Activated naive CD4-positive, alpha-beta T cell treated with anti-CD3 and anti-CD28 coated beads for 36 hours (primary cell): ENCODE measurements at regions of chr14 and their contacts with region 1.

Region 1: GRCh38 chr14:77660754-77661153 is 44.3 kb upstream of the SPTLC2 start:
- DNase-seq: no peak
- H3K4me3 Mint-ChIP-seq: no peak overlapping the region
- H3K27ac Mint-ChIP-seq: no peak overlapping the region
- H3K4me1 Mint-ChIP-seq: no peaks in the 10 kb centered on the region
- H3K27me3 Mint-ChIP-seq: no peaks in the 10 kb centered on the region

Region 2: DNA sequence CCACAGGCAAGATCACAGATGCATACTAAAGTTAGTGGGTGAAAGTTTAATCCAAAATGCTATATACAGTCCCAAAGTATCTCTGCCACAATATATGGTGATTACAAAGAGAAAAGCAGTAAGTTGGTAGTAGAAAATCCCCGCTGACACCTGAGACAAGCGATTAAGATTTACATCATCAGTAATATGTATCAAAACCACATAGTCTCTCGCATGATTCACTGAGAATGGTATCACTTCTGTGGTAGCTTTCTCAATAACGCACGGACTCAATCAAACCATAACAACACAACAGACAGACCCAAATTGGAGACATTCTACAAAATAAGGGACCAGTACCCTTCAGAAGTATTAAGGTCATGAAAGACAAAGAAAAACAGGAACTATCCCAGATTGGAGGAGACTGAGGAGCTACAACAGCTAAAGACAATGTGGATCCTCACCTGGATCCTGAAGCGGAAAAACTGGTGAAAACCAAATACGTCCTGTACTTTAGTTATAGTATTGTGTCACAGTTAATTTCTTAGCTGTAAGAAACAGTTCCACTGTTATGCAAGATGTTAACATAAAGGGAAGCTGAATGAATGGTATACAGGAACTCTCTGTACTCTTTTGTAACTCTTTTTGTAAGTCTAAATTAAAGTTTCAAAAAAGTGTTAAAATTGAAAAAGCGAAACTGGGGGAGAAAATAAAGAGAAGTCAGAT is 95.3 kb before region 1 on chr14:
- CTCF ChIA-PET with region 1: no interaction called
- intact Hi-C with region 1: no loop called
- DNase-seq: no peak
- H3K4me3 Mint-ChIP-seq: no peak overlapping the region
- H3K27ac Mint-ChIP-seq: peak overlapping the region; percentile 44
- H3K4me1 Mint-ChIP-seq: peaks cover 10% of the 10 kb centered on the region
- H3K27me3 Mint-ChIP-seq: no peaks in the 10 kb centered on the region

Region 3: DNA sequence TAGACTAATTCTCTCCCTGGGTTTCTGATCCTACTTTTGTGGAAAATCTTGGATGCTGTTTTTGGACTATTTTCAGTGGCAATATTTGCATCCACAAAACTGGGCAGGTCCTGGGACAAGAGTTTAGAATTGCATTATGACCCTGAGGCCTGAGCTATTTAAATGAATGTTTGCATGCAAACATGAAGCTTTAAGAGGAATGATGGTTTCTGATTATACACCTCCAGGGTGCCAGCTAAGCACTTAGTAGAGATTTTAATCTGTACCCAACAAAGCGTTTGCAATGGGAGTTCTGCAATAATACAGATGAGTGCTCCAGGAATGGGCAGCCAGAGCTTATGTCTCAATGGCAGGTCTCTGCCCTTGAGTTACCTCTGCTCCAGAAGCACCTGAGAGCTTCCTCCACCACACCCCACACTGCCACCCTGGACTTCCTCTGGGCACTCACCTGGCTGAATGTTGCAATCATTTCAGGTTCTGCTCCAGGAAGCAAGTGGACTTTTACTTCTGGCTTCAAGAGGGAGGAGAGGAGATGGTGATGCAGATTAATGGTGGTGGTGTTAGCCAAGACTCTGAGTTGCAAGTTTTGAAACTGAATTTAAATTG is 38.3 kb before region 1 on chr14:
- CTCF ChIA-PET with region 1: no interaction called
- intact Hi-C with region 1: no loop called
- DNase-seq: no peak
- H3K4me3 Mint-ChIP-seq: no peak overlapping the region
- H3K27ac Mint-ChIP-seq: no peak overlapping the region
- H3K4me1 Mint-ChIP-seq: peaks cover 4% of the 10 kb centered on the region
- H3K27me3 Mint-ChIP-seq: no peaks in the 10 kb centered on the region

Region 4: DNA sequence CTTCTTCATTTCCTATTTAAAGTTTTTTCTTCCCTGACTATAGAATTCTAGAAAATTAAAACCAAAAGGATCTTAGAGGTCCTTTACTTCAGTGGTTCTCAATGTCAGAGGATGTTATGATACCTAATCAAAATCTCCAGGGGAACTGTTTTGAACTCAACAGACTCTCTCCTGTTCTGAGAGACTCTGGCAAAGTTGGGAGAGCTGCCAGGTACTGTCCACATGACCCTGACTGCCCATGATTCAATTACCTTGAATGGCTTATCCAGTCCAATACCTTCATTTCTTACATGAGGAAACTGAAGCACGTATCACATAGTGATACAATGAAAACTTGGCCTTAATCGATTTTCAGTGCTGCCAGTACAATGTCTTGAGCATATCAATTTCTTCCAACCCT is 30.5 kb after region 1 on chr14:
- CTCF ChIA-PET with region 1: no interaction called
- intact Hi-C with region 1: no loop called
- DNase-seq: no peak
- H3K4me3 Mint-ChIP-seq: no peak overlapping the region
- H3K27ac Mint-ChIP-seq: no peak overlapping the region
- H3K4me1 Mint-ChIP-seq: no peaks in the 10 kb centered on the region
- H3K27me3 Mint-ChIP-seq: no peaks in the 10 kb centered on the region

Region 5: GRCh38 chr14:77812028-77812427 is 151.3 kb after region 1 on chr14:
- CTCF ChIA-PET with region 1: no interaction called
- intact Hi-C with region 1: loop called (anchors 1 kb)
- DNase-seq: no peak
- H3K4me3 Mint-ChIP-seq: no peak overlapping the region
- H3K27ac Mint-ChIP-seq: no peak overlapping the region
- H3K4me1 Mint-ChIP-seq: no peaks in the 10 kb centered on the region
- H3K27me3 Mint-ChIP-seq: no peaks in the 10 kb centered on the region